CD4-positive, alpha-beta T cell (primary cell): ENCODE measurements at regions of chr3 and their contacts with region 1.

Region 1: GRCh38 chr3:10322352-10322710 is 1.4 kb upstream of the SEC13 start:
- DNase-seq: peak in 3 of 14 experiments; percentile 32 to 53 (median 47)
- ATAC-seq: no peak
- H3K4me3 ChIP-seq: no peak overlapping the region
- H3K4me3 Mint-ChIP-seq: peak overlapping the region; percentile 87
- H3K27ac ChIP-seq: no peak overlapping the region
- H3K27ac Mint-ChIP-seq: peak overlapping the region; percentile 91
- H3K4me1 ChIP-seq: peaks cover 32% of the 10 kb centered on the region
- H3K4me1 Mint-ChIP-seq: peaks cover 32% of the 10 kb centered on the region
- H3K27me3 ChIP-seq: peaks cover 0 to 3% of the 10 kb centered on the region in 2 experiments
- H3K27me3 Mint-ChIP-seq: peaks cover 6% of the 10 kb centered on the region
- CTCF ChIP-seq: peak; percentile 34

Region 2: GRCh38 chr3:9362731-9363530 is 959.4 kb before region 1 on chr3 and contains the start of gene THUMPD3:
- CTCF ChIA-PET with region 1: no interaction called
- POLR2A ChIA-PET with region 1: interaction called, 4 read pairs
- intact Hi-C with region 1: loop called in 1 of 2 experiments (anchors 5 kb)
- DNase-seq: peak; percentile 82 to 95 (median 86)
- ATAC-seq: peak; percentile 91
- H3K4me3 ChIP-seq: peak within 1 kb of the TSS; percentile 88
- H3K4me3 Mint-ChIP-seq: peak within 1 kb of the TSS; percentile 96
- H3K27ac ChIP-seq: peak within 1 kb of the TSS; percentile 92 to 94
- H3K27ac Mint-ChIP-seq: peak within 1 kb of the TSS; percentile 99
- H3K4me1 ChIP-seq: peaks cover 20% of the 10 kb centered on the region
- H3K4me1 Mint-ChIP-seq: peaks cover 25% of the 10 kb centered on the region
- H3K27me3 ChIP-seq: no peaks in the 10 kb centered on the region
- H3K27me3 Mint-ChIP-seq: no peaks in the 10 kb centered on the region
- CTCF ChIP-seq: peak; percentile 13
- total RNA-seq, gene THUMPD3: 74.2 to 78.0 TPM

Region 3: GRCh38 chr3:9792405-9793160 is 529.7 kb before region 1 on chr3 and contains the starts of genes ARPC4 and TADA3:
- CTCF ChIA-PET with region 1: no interaction called
- POLR2A ChIA-PET with region 1: interaction called, 5 read pairs
- intact Hi-C with region 1: loop called in 1 of 2 experiments (anchors 5 kb)
- DNase-seq: peak; percentile 82 to 96 (median 88)
- ATAC-seq: peak; percentile 85
- H3K4me3 ChIP-seq: peak within 1 kb of the TSS; percentile 99
- H3K4me3 Mint-ChIP-seq: peak within 1 kb of the TSS; percentile 99
- H3K27ac ChIP-seq: peak within 1 kb of the TSS; percentile 95 to 98
- H3K27ac Mint-ChIP-seq: peak within 1 kb of the TSS; percentile 99
- H3K4me1 ChIP-seq: peaks cover 64% of the 10 kb centered on the region
- H3K4me1 Mint-ChIP-seq: peaks cover 76% of the 10 kb centered on the region
- H3K27me3 ChIP-seq: no peaks in the 10 kb centered on the region
- H3K27me3 Mint-ChIP-seq: no peaks in the 10 kb centered on the region
- CTCF ChIP-seq: no peak
- total RNA-seq, gene ARPC4: 88.7 to 91.3 TPM
- total RNA-seq, gene TADA3: 14.7 to 16.5 TPM

Region 4: GRCh38 chr3:10026084-10026890 is 296.0 kb before region 1 on chr3 and contains the start of gene FANCD2:
- CTCF ChIA-PET with region 1: no interaction called
- POLR2A ChIA-PET with region 1: interaction called, 11 read pairs
- intact Hi-C with region 1: loop called in 1 of 2 experiments (anchors 2 kb)
- DNase-seq: peak; percentile 82 to 97 (median 91)
- ATAC-seq: peak; percentile 91
- H3K4me3 ChIP-seq: peak within 1 kb of the TSS; percentile 87
- H3K4me3 Mint-ChIP-seq: peak within 1 kb of the TSS; percentile 98
- H3K27ac ChIP-seq: peak within 1 kb of the TSS; percentile 70 to 84
- H3K27ac Mint-ChIP-seq: peak within 1 kb of the TSS; percentile 98
- H3K4me1 ChIP-seq: peaks cover 33% of the 10 kb centered on the region
- H3K4me1 Mint-ChIP-seq: peaks cover 35% of the 10 kb centered on the region
- H3K27me3 ChIP-seq: no peaks in the 10 kb centered on the region
- H3K27me3 Mint-ChIP-seq: no peaks in the 10 kb centered on the region
- CTCF ChIP-seq: no peak
- total RNA-seq, gene FANCD2: 13.8 to 16.8 TPM

Region 5: GRCh38 chr3:10248184-10249080 is 73.9 kb before region 1 on chr3 and contains the start of gene TATDN2:
- CTCF ChIA-PET with region 1: interaction called, 3 read pairs
- POLR2A ChIA-PET with region 1: interaction called, 10 read pairs
- intact Hi-C with region 1: no loop called
- DNase-seq: peak; percentile 81 to 98 (median 90)
- ATAC-seq: peak; percentile 93
- H3K4me3 ChIP-seq: peak within 1 kb of the TSS; percentile 83
- H3K4me3 Mint-ChIP-seq: peak within 1 kb of the TSS; percentile 97
- H3K27ac ChIP-seq: peak within 1 kb of the TSS; percentile 63 to 83
- H3K27ac Mint-ChIP-seq: peak within 1 kb of the TSS; percentile 90
- H3K4me1 ChIP-seq: peaks cover 56% of the 10 kb centered on the region
- H3K4me1 Mint-ChIP-seq: peaks cover 60% of the 10 kb centered on the region
- H3K27me3 ChIP-seq: no peaks in the 10 kb centered on the region
- H3K27me3 Mint-ChIP-seq: no peaks in the 10 kb centered on the region
- CTCF ChIP-seq: no peak
- total RNA-seq, gene TATDN2: 48.7 to 50.2 TPM

Region 6: GRCh38 chr3:10366651-10367101 is 44.3 kb after region 1 on chr3:
- CTCF ChIA-PET with region 1: no interaction called
- POLR2A ChIA-PET with region 1: no interaction called
- intact Hi-C with region 1: no loop called
- DNase-seq: peak in 1 of 14 experiments; percentile 31
- ATAC-seq: peak; percentile 39
- H3K4me3 ChIP-seq: no peak overlapping the region
- H3K4me3 Mint-ChIP-seq: no peak overlapping the region
- H3K27ac ChIP-seq: no peak overlapping the region
- H3K27ac Mint-ChIP-seq: no peak overlapping the region
- H3K4me1 ChIP-seq: peaks cover 8% of the 10 kb centered on the region
- H3K4me1 Mint-ChIP-seq: no peaks in the 10 kb centered on the region
- H3K27me3 ChIP-seq: peaks cover 0 to 3% of the 10 kb centered on the region in 2 experiments
- H3K27me3 Mint-ChIP-seq: peaks cover 6% of the 10 kb centered on the region
- CTCF ChIP-seq: no peak

Region 7: GRCh38 chr3:10377148-10377725 is 54.9 kb after region 1 on chr3:
- CTCF ChIA-PET with region 1: no interaction called
- POLR2A ChIA-PET with region 1: no interaction called
- intact Hi-C with region 1: no loop called
- DNase-seq: no peak
- ATAC-seq: no peak
- H3K4me3 ChIP-seq: no peak overlapping the region
- H3K4me3 Mint-ChIP-seq: no peak overlapping the region
- H3K27ac ChIP-seq: no peak overlapping the region
- H3K27ac Mint-ChIP-seq: no peak overlapping the region
- H3K4me1 ChIP-seq: no peaks in the 10 kb centered on the region
- H3K4me1 Mint-ChIP-seq: no peaks in the 10 kb centered on the region
- H3K27me3 ChIP-seq: no peaks in the 10 kb centered on the region
- H3K27me3 Mint-ChIP-seq: no peaks in the 10 kb centered on the region
- CTCF ChIP-seq: no peak

Region 8: GRCh38 chr3:10419637-10420232 is 97.4 kb after region 1 on chr3:
- CTCF ChIA-PET with region 1: no interaction called
- POLR2A ChIA-PET with region 1: no interaction called
- intact Hi-C with region 1: no loop called
- DNase-seq: peak in 12 of 14 experiments; percentile 20 to 64 (median 42)
- ATAC-seq: peak; percentile 97
- H3K4me3 ChIP-seq: no peak overlapping the region
- H3K4me3 Mint-ChIP-seq: no peak overlapping the region
- H3K27ac ChIP-seq: no peak overlapping the region
- H3K27ac Mint-ChIP-seq: peak overlapping the region; percentile 44
- H3K4me1 ChIP-seq: peaks cover 9% of the 10 kb centered on the region
- H3K4me1 Mint-ChIP-seq: peaks cover 12% of the 10 kb centered on the region
- H3K27me3 ChIP-seq: no peaks in the 10 kb centered on the region
- H3K27me3 Mint-ChIP-seq: peaks cover 6% of the 10 kb centered on the region
- CTCF ChIP-seq: no peak

Region 9: DNA sequence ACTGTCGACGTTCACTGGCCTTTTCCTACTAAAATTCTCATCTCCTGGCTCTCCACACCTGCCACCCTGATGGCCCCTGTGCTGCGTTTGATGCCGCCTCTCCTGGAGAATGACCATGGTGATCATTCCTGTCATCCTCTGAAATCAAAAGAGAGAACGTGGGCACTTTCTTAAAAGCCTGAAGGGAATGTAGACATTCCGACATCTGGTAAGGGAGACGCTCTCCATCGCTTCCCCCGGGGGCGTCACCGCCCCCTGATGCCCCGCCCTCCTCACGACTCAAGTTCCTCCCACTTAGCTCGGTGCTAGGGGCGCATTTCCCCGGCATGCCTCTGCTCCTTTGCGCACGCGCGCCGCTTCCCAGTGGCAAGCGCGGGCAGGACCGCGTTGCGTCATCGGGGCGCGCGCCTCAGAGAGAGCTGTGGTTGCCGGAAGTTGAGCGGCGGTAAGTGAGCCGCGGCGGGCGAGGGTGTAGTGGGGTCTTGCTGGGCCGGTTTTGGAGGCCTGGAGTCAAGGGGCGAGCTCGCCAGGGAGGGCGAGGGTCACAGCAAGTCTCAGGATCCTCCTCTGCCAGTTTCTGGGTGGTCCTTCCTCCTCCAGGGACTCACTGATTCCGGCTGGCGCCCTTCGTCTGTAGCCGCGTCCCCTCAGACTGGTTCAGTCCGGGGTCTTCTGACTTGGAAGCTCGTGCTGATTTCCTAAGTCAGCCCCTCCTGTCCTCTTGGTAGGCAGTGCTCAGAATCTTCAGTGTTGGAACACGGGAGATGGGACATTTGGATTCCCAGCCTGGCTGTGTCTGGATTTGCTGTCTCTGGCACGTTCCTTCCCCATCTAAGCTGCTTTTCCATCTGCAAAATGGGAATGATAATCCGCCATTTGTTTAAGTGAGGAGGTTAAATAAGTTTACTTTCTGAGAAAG is 949.9 kb after region 1 on chr3 and contains the start of gene ATG7:
- CTCF ChIA-PET with region 1: no interaction called
- POLR2A ChIA-PET with region 1: no interaction called
- intact Hi-C with region 1: loop called in 1 of 2 experiments (anchors 5 kb)
- DNase-seq: peak; percentile 92 to 99 (median 96)
- ATAC-seq: peak; percentile 96
- H3K4me3 ChIP-seq: peak within 1 kb of the TSS; percentile 90
- H3K4me3 Mint-ChIP-seq: peak within 1 kb of the TSS; percentile 98
- H3K27ac ChIP-seq: peak within 1 kb of the TSS; percentile 78 to 90
- H3K27ac Mint-ChIP-seq: peak within 1 kb of the TSS; percentile 98
- H3K4me1 ChIP-seq: peaks cover 24% of the 10 kb centered on the region
- H3K4me1 Mint-ChIP-seq: peaks cover 54% of the 10 kb centered on the region
- H3K27me3 ChIP-seq: no peaks in the 10 kb centered on the region
- H3K27me3 Mint-ChIP-seq: no peaks in the 10 kb centered on the region
- CTCF ChIP-seq: no peak
- total RNA-seq, gene ATG7: 21.4 to 25.7 TPM